ENCODE measurements at regions of chr3 and their contacts with region 1.

Region 1: DNA sequence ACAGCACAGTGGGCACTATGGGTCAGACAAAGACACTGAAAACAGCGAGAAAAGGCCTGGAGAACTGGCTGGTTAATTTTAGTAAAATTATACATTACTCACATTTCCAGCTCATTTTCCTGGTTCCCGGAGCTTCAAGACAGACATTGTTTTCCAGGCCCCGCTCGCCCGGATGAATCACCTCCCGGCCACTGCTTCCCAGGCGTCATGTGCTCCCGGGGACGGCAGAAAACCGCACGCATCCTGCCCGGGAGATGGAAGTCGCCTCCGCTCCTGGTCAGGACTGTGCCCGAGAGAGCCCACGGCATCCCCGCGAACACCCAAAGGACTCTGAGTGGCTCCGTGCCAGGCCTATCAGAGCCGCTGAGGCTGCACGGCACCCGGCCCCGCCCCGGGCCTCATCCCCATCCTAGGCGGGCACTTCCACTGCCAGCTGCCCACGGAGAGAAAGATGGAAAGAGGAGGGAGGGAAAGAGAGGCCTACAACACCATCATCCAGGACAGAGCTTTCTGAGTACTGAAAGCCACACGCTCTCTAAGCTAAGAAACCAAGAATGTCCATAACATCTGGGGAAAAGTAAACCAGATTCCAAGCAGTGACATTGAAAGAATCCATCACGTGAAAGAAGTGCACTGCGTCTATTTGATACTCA is 75.1 kb downstream of the VGLL4 start:
- DNase-seq: peak; percentile 92

Region 2: GRCh38 chr3:11465744-11466616 is 102.6 kb before region 1 on chr3:
- intact Hi-C with region 1: loop called (anchors 5 kb)
- DNase-seq: no peak

Region 3: GRCh38 chr3:11719406-11720230 is 151.0 kb after region 1 on chr3:
- intact Hi-C with region 1: loop called (anchors 10 kb)
- DNase-seq: peak; percentile 87

Region 4: GRCh38 chr3:11803977-11804892 is 235.6 kb after region 1 on chr3:
- intact Hi-C with region 1: loop called (anchors 10 kb)
- DNase-seq: no peak